ENCODE measurements at regions of chr6 and their contacts with region 1.

Region 1: DNA sequence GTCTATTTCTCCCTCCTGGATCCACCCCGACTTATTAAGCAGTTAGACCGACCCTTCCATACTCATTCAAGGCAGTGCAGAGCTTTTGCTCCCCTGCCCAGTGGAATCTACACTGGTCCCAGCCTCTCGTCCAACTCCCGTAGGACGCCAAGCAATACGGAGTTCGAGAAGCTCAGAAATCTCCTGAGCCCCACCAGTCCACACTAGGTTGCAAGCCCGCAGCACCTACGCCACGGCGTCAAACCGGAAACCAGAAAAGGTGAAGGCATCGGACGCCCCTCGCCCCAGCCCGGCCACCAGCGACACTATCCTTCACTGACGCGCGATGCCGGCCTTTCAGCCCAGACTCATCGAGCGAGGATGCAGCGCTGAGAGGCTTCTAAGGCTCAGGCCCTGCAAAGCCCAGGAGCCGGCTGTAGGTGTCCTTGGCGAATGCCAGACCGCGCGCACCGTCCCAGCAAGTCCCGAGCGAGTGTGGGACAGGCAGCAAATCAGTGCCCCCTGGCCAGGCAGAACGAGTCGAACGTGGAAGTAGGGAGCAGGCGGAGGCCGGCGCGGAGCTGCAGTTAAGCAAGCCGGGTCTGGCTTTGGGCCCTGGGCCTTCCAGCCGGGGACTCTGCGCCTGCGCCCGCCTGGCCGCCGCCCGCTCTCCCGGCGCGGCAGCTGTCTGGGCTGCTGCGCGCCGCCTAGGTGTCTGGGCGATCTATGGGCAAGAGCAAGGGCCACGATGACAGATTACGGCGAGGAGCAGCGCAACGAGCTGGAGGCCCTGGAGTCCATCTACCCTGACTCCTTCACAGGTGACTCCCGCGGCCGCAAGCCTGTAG is at the start of gene RWDD1:
- DNase-seq: peak; percentile 96 to 100 (median 97)
- ATAC-seq: peak; percentile 94
- H3K4me3 ChIP-seq: peak within 1 kb of the TSS; percentile 90
- H3K4me3 Mint-ChIP-seq: peak within 1 kb of the TSS; percentile 95
- H3K27ac ChIP-seq: peak within 1 kb of the TSS; percentile 85 to 95
- H3K27ac Mint-ChIP-seq: peak within 1 kb of the TSS; percentile 97
- H3K4me1 ChIP-seq: peaks cover 11% of the 10 kb centered on the region
- H3K4me1 Mint-ChIP-seq: peaks cover 55% of the 10 kb centered on the region
- H3K27me3 ChIP-seq: no peaks in the 10 kb centered on the region
- H3K27me3 Mint-ChIP-seq: no peaks in the 10 kb centered on the region
- CTCF ChIP-seq: no peak
- total RNA-seq, gene RWDD1: 60.3 to 60.5 TPM

Region 2: GRCh38 chr6:116100419-116101301 is 470.4 kb before region 1 on chr6 and contains the start of gene NT5DC1:
- CTCF ChIA-PET with region 1: interaction called, 5 read pairs
- POLR2A ChIA-PET with region 1: interaction called, 20 read pairs
- intact Hi-C with region 1: loop called in 1 of 2 experiments (anchors 5 kb)
- DNase-seq: peak; percentile 65 to 92 (median 82)
- ATAC-seq: peak; percentile 92
- H3K4me3 ChIP-seq: peak within 1 kb of the TSS; percentile 67
- H3K4me3 Mint-ChIP-seq: peak within 1 kb of the TSS; percentile 99
- H3K27ac ChIP-seq: peak within 1 kb of the TSS; percentile 69 to 75
- H3K27ac Mint-ChIP-seq: peak within 1 kb of the TSS; percentile 80
- H3K4me1 ChIP-seq: peaks cover 26% of the 10 kb centered on the region
- H3K4me1 Mint-ChIP-seq: peaks cover 58% of the 10 kb centered on the region
- H3K27me3 ChIP-seq: no peaks in the 10 kb centered on the region
- H3K27me3 Mint-ChIP-seq: no peaks in the 10 kb centered on the region
- CTCF ChIP-seq: peak; percentile 52
- total RNA-seq, gene NT5DC1: 24.2 to 27.2 TPM

Region 3: DNA sequence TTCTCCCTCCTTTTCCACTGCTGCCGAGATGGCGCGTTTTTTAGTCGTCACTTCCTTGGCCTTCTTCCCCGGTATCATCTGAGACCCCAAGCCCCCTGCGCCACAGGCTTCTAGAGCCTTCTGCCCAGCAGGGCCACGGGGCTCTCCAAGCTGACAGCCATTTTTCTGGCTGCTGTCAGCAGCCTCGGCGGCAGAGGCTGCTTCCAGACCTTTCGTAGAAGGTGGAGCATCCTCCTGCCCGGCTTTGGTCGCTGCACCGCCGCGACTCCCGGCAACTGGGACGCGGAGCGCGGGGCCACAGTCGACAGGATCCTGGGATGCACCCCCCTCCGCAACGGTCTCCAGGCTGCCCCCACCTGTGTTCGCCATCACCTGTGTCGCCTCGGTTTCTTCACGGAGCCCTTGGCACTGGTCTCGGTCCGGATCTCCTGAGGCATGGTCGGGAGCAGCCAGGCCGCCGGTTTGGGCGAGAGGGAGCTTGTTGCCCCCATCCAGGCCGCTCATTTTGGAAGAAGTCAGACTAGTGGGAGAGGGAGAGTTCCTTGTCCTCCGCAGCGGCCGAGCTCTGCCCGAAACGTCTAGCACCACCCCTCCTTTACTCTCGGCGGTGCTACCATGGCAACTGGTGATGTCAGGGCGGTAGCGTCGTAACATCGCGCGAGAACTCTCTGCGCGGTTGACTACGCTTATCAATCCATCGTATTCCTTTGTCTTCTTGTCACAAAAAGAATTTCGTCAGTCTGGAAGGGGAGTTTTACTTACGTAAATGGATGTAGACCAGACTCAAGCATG is 317.4 kb before region 1 on chr6 and contains the start of gene TSPYL4:
- CTCF ChIA-PET with region 1: no interaction called
- POLR2A ChIA-PET with region 1: interaction called, 19 read pairs
- intact Hi-C with region 1: no loop called
- DNase-seq: peak; percentile 80 to 98 (median 88)
- ATAC-seq: peak; percentile 96
- H3K4me3 ChIP-seq: peak within 1 kb of the TSS; percentile 91
- H3K4me3 Mint-ChIP-seq: no peak within 1 kb of the TSS
- H3K27ac ChIP-seq: peak within 1 kb of the TSS; percentile 92 to 94
- H3K27ac Mint-ChIP-seq: no peak within 1 kb of the TSS
- H3K4me1 ChIP-seq: peaks cover 31% of the 10 kb centered on the region
- H3K4me1 Mint-ChIP-seq: peaks cover 6% of the 10 kb centered on the region
- H3K27me3 ChIP-seq: no peaks in the 10 kb centered on the region
- H3K27me3 Mint-ChIP-seq: no peaks in the 10 kb centered on the region
- CTCF ChIP-seq: no peak
- total RNA-seq, gene TSPYL4: 35.9 to 37.7 TPM

Region 4: GRCh38 chr6:116268589-116269293 is 302.3 kb before region 1 on chr6:
- CTCF ChIA-PET with region 1: interaction called, 10 read pairs
- POLR2A ChIA-PET with region 1: interaction called, 5 read pairs
- intact Hi-C with region 1: no loop called
- DNase-seq: peak in 3 of 14 experiments; percentile 67 to 81 (median 76)
- ATAC-seq: peak; percentile 95
- H3K4me3 ChIP-seq: no peak overlapping the region
- H3K4me3 Mint-ChIP-seq: no peak overlapping the region
- H3K27ac ChIP-seq: peak overlapping the region in 1 of 2 donors; percentile 10
- H3K27ac Mint-ChIP-seq: peak overlapping the region; percentile 4
- H3K4me1 ChIP-seq: peaks cover 9% of the 10 kb centered on the region
- H3K4me1 Mint-ChIP-seq: peaks cover 38% of the 10 kb centered on the region
- H3K27me3 ChIP-seq: no peaks in the 10 kb centered on the region
- H3K27me3 Mint-ChIP-seq: no peaks in the 10 kb centered on the region
- CTCF ChIP-seq: peak; percentile 94

Region 5: GRCh38 chr6:116615937-116616736 is 45.1 kb after region 1 on chr6 and contains the start of gene RSPH4A:
- CTCF ChIA-PET with region 1: no interaction called
- POLR2A ChIA-PET with region 1: interaction called, 10 read pairs
- intact Hi-C with region 1: no loop called
- DNase-seq: peak; percentile 31 to 86 (median 48)
- ATAC-seq: peak; percentile 95
- H3K4me3 ChIP-seq: peak within 1 kb of the TSS; percentile 62
- H3K4me3 Mint-ChIP-seq: peak within 1 kb of the TSS; percentile 85
- H3K27ac ChIP-seq: no peak within 1 kb of the TSS
- H3K27ac Mint-ChIP-seq: peak within 1 kb of the TSS; percentile 0
- H3K4me1 ChIP-seq: peaks cover 13% of the 10 kb centered on the region
- H3K4me1 Mint-ChIP-seq: peaks cover 19% of the 10 kb centered on the region
- H3K27me3 ChIP-seq: no peaks in the 10 kb centered on the region
- H3K27me3 Mint-ChIP-seq: peaks cover 2% of the 10 kb centered on the region
- CTCF ChIP-seq: no peak
- total RNA-seq, gene RSPH4A: 0.56 to 0.88 TPM

Region 6: GRCh38 chr6:116667623-116668022 is 96.6 kb after region 1 on chr6:
- CTCF ChIA-PET with region 1: no interaction called
- POLR2A ChIA-PET with region 1: interaction called, 23 read pairs
- intact Hi-C with region 1: loop called (anchors 5 kb)
- DNase-seq: peak in 1 of 14 experiments; percentile 22
- ATAC-seq: no peak
- H3K4me3 ChIP-seq: peak overlapping the region; percentile 74
- H3K4me3 Mint-ChIP-seq: peak overlapping the region; percentile 97
- H3K27ac ChIP-seq: no peak overlapping the region
- H3K27ac Mint-ChIP-seq: peak overlapping the region; percentile 96
- H3K4me1 ChIP-seq: peaks cover 21% of the 10 kb centered on the region
- H3K4me1 Mint-ChIP-seq: peaks cover 50% of the 10 kb centered on the region
- H3K27me3 ChIP-seq: no peaks in the 10 kb centered on the region
- H3K27me3 Mint-ChIP-seq: no peaks in the 10 kb centered on the region
- CTCF ChIP-seq: no peak

Region 7: DNA sequence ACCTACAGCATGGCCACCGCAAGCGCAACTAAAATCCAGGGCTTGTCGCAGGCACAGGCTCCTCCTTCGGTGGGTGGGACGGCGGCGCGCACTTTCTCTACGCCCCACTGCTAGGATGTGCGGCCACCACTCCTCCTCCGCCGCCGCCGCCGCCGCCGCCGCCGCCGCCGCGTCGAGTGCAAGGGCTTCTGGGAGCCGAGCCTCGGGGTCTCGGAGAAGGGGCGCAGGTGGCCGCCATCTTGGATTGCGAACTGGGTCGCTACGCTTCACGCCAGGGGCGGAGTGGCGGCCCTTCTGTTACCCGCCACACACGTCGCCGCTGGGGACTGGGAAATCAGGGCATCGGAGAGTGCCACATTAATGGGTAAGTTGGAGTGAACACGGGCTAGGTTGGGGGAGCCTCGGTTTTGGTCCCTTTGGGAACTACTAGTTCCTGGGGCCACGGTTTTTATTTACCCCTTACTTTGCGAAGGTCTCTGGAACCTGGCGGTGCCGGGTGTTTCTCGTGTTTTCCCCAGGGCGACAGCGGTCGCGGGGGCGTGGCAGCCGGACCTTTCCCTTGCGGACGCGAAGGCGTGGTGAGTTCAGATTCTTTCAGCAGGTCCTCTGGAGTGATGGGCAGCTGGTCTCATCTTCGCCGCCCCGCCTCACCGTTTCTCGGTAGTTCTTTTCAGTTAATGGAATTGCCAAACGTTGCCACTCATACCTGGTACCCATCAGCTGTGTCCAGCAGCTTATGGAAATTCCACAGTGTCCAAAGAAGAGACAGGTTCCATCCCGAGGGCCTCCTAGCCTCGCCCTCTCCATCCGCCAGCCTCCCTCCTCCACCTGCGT is 110.1 kb after region 1 on chr6 and contains the start of gene KPNA5:
- CTCF ChIA-PET with region 1: no interaction called
- POLR2A ChIA-PET with region 1: interaction called, 46 read pairs
- intact Hi-C with region 1: no loop called
- DNase-seq: peak; percentile 83 to 96 (median 90)
- ATAC-seq: peak; percentile 93
- H3K4me3 ChIP-seq: peak within 1 kb of the TSS; percentile 82
- H3K4me3 Mint-ChIP-seq: peak within 1 kb of the TSS; percentile 99
- H3K27ac ChIP-seq: peak within 1 kb of the TSS; percentile 85 to 89
- H3K27ac Mint-ChIP-seq: peak within 1 kb of the TSS; percentile 94
- H3K4me1 ChIP-seq: peaks cover 28% of the 10 kb centered on the region
- H3K4me1 Mint-ChIP-seq: peaks cover 60% of the 10 kb centered on the region
- H3K27me3 ChIP-seq: no peaks in the 10 kb centered on the region
- H3K27me3 Mint-ChIP-seq: no peaks in the 10 kb centered on the region
- CTCF ChIP-seq: no peak
- total RNA-seq, gene KPNA5: 60.0 to 66.0 TPM